HepG2 (cell line): ENCODE measurements at regions of chr7 and their contacts with region 1.

Region 1: DNA sequence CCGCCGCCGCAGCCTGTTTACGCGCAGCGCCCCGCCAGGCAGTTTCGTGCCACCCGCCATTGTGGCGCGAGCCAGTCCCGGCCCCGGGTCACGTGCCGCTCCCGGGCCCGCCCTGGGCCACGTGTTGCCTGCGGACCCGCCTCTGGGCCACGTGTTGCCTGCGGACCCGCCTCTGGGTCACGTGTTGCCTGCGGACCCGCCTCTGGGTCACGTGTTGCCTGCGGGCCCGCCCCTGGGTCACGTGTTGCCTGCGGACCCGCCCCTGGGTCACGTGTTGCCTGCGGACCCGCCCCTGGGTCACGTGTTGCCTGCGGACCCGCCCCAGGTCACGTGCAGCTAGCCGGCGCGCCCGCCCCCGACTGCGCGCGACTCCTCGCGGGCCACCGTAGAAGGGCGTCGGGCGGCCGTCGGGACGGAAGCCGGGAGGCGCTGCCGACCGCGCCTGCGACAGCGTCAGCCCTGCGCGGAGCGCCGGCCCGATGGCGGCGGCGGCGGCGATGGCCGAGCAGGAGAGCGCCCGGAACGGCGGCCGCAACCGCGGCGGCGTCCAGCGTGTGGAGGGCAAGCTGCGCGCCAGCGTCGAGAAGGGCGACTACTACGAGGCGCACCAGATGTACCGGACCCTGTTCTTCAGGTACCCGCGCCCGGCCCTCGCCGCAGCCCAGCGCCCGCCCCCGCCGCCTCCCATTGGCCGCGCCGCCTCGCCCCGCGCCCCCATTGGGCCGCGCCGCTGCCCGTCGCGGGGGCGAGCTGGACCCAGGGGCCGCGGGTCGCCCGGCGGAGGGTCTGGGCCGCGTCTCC is at the start of gene GET4:
- DNase-seq: peak; percentile 65
- ATAC-seq: peak; percentile 88
- H3K4me3 ChIP-seq: peak within 1 kb of the TSS; percentile 73 to 98 (median 86)
- H3K27ac ChIP-seq: peak within 1 kb of the TSS; percentile 83
- H3K4me1 ChIP-seq: peaks cover 41% of the 10 kb centered on the region
- H3K27me3 ChIP-seq: no peaks in the 10 kb centered on the region
- CTCF ChIP-seq: no peak; the same call in 1 of the 2 replicates
- EP300 ChIP-seq: 0 out of 4 replicates have a peak, but pooled peaks of 1 of the 2 experiments have one; percentile 16
- POLR2A ChIP-seq: peak; percentile 58 to 67
- RAD21 ChIP-seq: peak; percentile 53
- total RNA-seq, gene GET4: 28.2 and 31.6 TPM in 2 replicates

Region 2: GRCh38 chr7:786472-787255 is 89.7 kb before region 1 on chr7:
- CTCF ChIA-PET with region 1: interaction called, 23 read pairs
- POLR2A ChIA-PET with region 1: no interaction called
- in situ Hi-C with region 1: loop called (anchors 5 kb)
- intact Hi-C with region 1: loop called (anchors 1 kb)
- DNase-seq: peak; percentile 39
- ATAC-seq: peak; percentile 83
- H3K4me3 ChIP-seq: no peak overlapping the region
- H3K27ac ChIP-seq: no peak overlapping the region
- H3K4me1 ChIP-seq: no peaks in the 10 kb centered on the region
- H3K27me3 ChIP-seq: no peaks in the 10 kb centered on the region
- CTCF ChIP-seq: peak; percentile 93
- EP300 ChIP-seq: no peak
- POLR2A ChIP-seq: no peak
- RAD21 ChIP-seq: peak; percentile 71; the same call in 1 of the 2 replicates

Region 3: GRCh38 chr7:836411-837400 is 39.7 kb before region 1 on chr7:
- CTCF ChIA-PET with region 1: no interaction called
- POLR2A ChIA-PET with region 1: no interaction called
- in situ Hi-C with region 1: no loop called
- intact Hi-C with region 1: loop called (anchors 1 kb)
- DNase-seq: peak; percentile 58
- ATAC-seq: peak; percentile 93
- H3K4me3 ChIP-seq: no peak overlapping the region
- H3K27ac ChIP-seq: no peak overlapping the region
- H3K4me1 ChIP-seq: peaks cover 17% of the 10 kb centered on the region
- H3K27me3 ChIP-seq: no peaks in the 10 kb centered on the region
- CTCF ChIP-seq: peak; percentile 77
- EP300 ChIP-seq: no peak
- POLR2A ChIP-seq: no peak
- RAD21 ChIP-seq: no peak